Activated CD4-positive, alpha-beta T cell treated with anti-CD3 and anti-CD28 coated beads, Interleukin-2, amount 10 ng/mL, durations not matched to agents 24 days and 14 days (primary cell): ENCODE measurements at regions of chr17 and their contacts with region 1.

Region 1: GRCh38 chr17:35063514-35064223 is at the start of gene RFFL:
- DNase-seq: peak; percentile 95
- H3K4me3 Mint-ChIP-seq: peak within 1 kb of the TSS; percentile 73
- H3K27ac Mint-ChIP-seq: peak within 1 kb of the TSS; percentile 90
- H3K4me1 Mint-ChIP-seq: peaks cover 50% of the 10 kb centered on the region
- H3K27me3 Mint-ChIP-seq: no peaks in the 10 kb centered on the region
- total RNA-seq, gene RFFL: 23.5 TPM in 2 replicates

Region 2: GRCh38 chr17:34998205-34998604 is 65.5 kb before region 1 on chr17:
- intact Hi-C with region 1: loop called (anchors 2 kb)
- DNase-seq: peak; percentile 95
- H3K4me3 Mint-ChIP-seq: no peak overlapping the region
- H3K27ac Mint-ChIP-seq: peak overlapping the region; percentile 58
- H3K4me1 Mint-ChIP-seq: peaks cover 4% of the 10 kb centered on the region
- H3K27me3 Mint-ChIP-seq: no peaks in the 10 kb centered on the region

Region 3: GRCh38 chr17:35022536-35023063 is 41.1 kb before region 1 on chr17:
- intact Hi-C with region 1: loop called (anchors 1 kb)
- DNase-seq: peak; percentile 91
- H3K4me3 Mint-ChIP-seq: peak overlapping the region; percentile 64
- H3K27ac Mint-ChIP-seq: peak overlapping the region; percentile 95
- H3K4me1 Mint-ChIP-seq: peaks cover 44% of the 10 kb centered on the region
- H3K27me3 Mint-ChIP-seq: no peaks in the 10 kb centered on the region

Region 4: GRCh38 chr17:35046740-35047283 is 16.9 kb before region 1 on chr17:
- intact Hi-C with region 1: loop called (anchors 1 kb)
- DNase-seq: peak; percentile 91
- H3K4me3 Mint-ChIP-seq: peak overlapping the region; percentile 63
- H3K27ac Mint-ChIP-seq: peak overlapping the region; percentile 94
- H3K4me1 Mint-ChIP-seq: peaks cover 41% of the 10 kb centered on the region
- H3K27me3 Mint-ChIP-seq: no peaks in the 10 kb centered on the region

Region 5: DNA sequence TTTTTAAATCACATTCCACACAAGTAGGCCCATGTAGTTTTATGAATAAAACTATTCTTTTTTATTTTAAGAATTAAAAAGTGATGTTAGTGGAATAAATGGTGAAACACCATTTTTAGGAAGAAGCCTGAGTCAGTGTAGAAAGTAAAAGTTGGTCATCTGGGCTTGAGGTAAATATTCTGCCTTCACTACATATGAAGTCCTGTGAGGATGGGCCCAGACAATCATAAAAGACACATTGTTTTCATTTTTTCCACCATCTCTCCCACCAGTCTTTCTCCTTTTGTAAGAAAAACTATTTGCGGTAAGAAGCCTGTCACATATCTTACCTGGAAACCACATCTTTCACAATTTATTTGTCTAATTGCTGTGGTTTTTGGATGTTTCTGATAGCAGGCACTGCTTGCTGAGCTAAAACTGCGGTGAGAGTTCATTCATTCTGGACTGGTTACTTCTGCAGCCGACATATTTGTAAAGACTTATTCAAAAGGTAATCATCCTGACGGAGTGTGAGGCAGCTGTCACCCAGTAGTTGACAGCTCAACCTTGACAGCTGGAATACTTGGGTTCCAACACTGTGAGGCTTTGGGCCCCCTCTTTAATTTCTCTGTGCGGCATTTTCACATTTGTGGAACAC is 10.4 kb after region 1 on chr17:
- intact Hi-C with region 1: loop called (anchors 1 kb)
- DNase-seq: no peak
- H3K4me3 Mint-ChIP-seq: peak overlapping the region; percentile 66
- H3K27ac Mint-ChIP-seq: peak overlapping the region; percentile 91
- H3K4me1 Mint-ChIP-seq: peaks cover 52% of the 10 kb centered on the region
- H3K27me3 Mint-ChIP-seq: no peaks in the 10 kb centered on the region

Region 6: GRCh38 chr17:35082073-35082657 is 18.5 kb after region 1 on chr17:
- intact Hi-C with region 1: loop called (anchors 1 kb)
- DNase-seq: no peak
- H3K4me3 Mint-ChIP-seq: peak overlapping the region; percentile 49
- H3K27ac Mint-ChIP-seq: peak overlapping the region; percentile 94
- H3K4me1 Mint-ChIP-seq: peaks cover 67% of the 10 kb centered on the region
- H3K27me3 Mint-ChIP-seq: no peaks in the 10 kb centered on the region

Region 7: DNA sequence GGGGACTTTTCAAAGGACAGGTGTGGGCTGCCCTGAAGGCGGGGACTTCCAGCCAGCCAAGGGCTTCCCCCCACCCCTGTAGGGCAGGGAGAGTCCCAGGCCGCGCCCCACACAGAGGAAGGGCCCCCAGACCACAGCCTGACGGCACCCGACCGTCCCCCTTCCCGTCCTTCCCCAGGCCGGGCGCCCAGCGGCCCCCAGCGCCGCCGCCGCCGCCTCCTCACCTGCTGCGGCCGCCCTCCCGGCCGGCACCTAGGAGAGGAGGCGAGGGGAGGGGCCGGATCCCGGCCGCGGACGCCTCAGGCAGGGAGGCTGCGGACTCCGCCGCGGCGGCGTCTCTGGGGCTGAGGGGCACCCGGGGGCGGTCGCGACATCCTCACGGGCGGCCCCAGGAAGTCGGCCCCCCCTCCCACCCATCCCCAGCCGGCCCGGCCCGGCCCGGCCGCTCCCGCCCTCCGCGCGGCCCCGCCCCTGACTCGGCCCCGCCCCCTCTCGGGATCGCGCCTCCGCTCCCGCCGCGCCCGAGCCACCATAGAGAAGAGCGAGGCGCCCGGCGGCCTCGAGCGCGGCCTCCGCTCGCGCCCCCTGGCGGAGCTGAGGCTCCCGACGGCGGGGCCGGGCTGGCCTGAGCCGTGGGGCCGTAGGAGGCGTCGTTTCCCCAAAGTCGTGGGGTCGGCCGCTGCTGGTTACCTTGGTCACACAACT is 25.4 kb after region 1 on chr17:
- intact Hi-C with region 1: loop called (anchors 1 kb)
- DNase-seq: peak; percentile 97
- H3K4me3 Mint-ChIP-seq: peak overlapping the region; percentile 95
- H3K27ac Mint-ChIP-seq: peak overlapping the region; percentile 96
- H3K4me1 Mint-ChIP-seq: peaks cover 44% of the 10 kb centered on the region
- H3K27me3 Mint-ChIP-seq: no peaks in the 10 kb centered on the region

Region 8: GRCh38 chr17:35127751-35128514 is 64.3 kb after region 1 on chr17:
- intact Hi-C with region 1: no loop called
- DNase-seq: no peak
- H3K4me3 Mint-ChIP-seq: no peak overlapping the region
- H3K27ac Mint-ChIP-seq: no peak overlapping the region
- H3K4me1 Mint-ChIP-seq: no peaks in the 10 kb centered on the region
- H3K27me3 Mint-ChIP-seq: no peaks in the 10 kb centered on the region